ENCODE measurements at regions of chr9 and their contacts with region 1.

Region 1: DNA sequence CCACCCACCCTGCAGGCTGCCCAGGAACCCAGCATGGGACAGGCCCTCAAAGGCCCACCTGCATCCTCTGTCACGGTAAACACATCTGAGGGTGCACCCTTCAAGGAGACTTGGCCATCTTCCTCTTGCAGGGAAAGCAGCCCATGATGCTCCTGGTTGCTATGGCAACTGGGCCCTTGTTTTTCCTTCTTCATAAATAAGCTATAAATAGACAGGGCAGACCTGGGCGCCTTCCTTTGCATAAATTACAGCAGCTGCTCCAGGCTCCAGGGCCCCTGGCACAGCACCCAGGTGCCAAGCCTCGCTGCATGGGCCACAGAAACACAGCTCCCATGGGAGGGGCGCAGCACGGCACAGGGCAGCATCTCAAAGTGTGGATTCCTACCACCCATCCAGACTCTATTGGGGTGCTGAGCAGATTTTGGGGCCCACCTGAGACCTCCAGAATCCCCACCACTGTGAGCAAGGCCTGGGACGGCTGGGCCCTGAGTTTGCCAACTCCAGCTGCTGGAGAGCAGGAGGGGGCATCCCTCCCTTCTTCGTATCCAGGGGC is 5.8 kb upstream of the PSMB7 start:
- DNase-seq: no peak
- H3K4me3 ChIP-seq: no peak overlapping the region
- H3K27ac ChIP-seq: no peak overlapping the region
- H3K4me1 ChIP-seq: no peaks in the 10 kb centered on the region
- H3K27me3 ChIP-seq: no peaks in the 10 kb centered on the region
- CTCF ChIP-seq: no peak

Region 2: DNA sequence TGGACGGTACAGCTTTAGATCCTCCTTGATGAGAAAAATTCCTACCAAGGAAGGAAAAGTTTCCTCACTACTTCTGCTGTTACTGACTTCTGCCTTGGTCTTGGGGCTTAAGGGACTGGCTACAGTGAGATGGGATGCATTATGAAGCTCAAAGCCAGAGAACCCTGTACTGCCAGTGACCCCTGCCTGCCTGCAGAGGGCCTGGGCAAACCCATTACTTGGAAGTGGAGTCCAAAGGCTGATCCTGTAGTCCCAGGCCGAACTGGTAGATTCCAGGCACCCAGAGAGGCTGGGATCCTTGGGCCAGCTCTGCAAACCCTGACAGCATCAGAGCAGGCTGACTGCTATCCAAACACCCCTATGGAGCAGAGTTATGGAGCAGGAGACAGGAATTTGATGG is 111.8 kb after region 1 on chr9:
- CTCF ChIA-PET with region 1: interaction called, 22 read pairs
- POLR2A ChIA-PET with region 1: no interaction called
- intact Hi-C with region 1: loop called (anchors 1 kb)
- DNase-seq: no peak
- H3K4me3 ChIP-seq: no peak overlapping the region
- H3K27ac ChIP-seq: no peak overlapping the region
- H3K4me1 ChIP-seq: peaks cover 14% of the 10 kb centered on the region
- H3K27me3 ChIP-seq: no peaks in the 10 kb centered on the region
- CTCF ChIP-seq: no peak

Region 3: GRCh38 chr9:124617471-124618141 is 196.5 kb after region 1 on chr9:
- CTCF ChIA-PET with region 1: no interaction called
- POLR2A ChIA-PET with region 1: no interaction called
- intact Hi-C with region 1: loop called (anchors 1 kb)
- DNase-seq: peak; percentile 60 to 80
- H3K4me3 ChIP-seq: no peak overlapping the region
- H3K27ac ChIP-seq: peak overlapping the region; percentile 38
- H3K4me1 ChIP-seq: peaks cover 19% of the 10 kb centered on the region
- H3K27me3 ChIP-seq: no peaks in the 10 kb centered on the region
- CTCF ChIP-seq: peak; percentile 91

Region 4: GRCh38 chr9:124721109-124721906 is 300.2 kb after region 1 on chr9:
- CTCF ChIA-PET with region 1: interaction called, 11 read pairs
- POLR2A ChIA-PET with region 1: no interaction called
- intact Hi-C with region 1: no loop called
- DNase-seq: peak; percentile 18 to 54
- H3K4me3 ChIP-seq: no peak overlapping the region
- H3K27ac ChIP-seq: peak overlapping the region; percentile 16; the same call in 1 of the 2 replicates
- H3K4me1 ChIP-seq: peaks cover 6% of the 10 kb centered on the region; the same call in 1 of the 2 replicates
- H3K27me3 ChIP-seq: no peaks in the 10 kb centered on the region
- CTCF ChIP-seq: no peak

Region 5: DNA sequence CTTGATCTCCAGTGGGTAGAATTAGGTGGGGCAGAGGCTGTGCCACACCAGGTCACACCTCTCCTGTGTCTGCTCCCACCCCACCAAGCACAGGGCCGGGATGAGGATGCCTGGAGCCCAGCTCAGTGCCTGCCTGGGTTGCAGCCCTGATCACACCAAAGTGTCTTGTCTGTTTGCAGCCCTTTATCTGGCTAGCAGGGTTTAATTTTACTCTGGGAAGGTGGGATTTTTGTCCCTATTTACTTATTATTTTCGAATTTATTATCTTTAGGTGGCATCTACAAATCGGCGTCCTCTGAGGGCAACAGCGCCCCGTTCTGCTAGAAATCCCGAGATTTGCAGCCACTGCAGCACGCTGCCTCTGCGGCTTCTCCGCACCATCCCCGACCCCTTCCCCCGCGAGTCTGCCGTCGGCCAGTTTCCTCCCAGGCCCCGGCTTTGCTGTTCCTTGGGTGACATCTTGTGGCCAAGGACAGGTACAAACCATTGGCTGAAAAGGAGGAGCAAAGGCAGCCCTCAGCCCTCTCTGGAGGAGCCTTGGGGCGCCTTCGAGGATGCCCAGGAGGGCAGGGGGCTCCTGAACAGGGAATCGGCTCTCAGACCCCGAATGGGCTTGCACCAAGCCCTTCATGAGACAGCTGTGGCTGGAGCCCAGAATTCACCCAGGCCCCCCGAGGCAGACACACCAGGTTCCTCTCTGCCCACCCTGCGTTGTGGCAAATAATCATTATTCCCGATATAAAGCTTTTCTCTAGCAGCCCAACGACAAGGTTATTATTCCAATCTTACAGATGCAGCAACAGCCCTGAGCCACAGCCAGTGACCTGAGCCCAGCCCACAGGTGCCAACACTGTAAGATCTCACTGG is 953.6 kb after region 1 on chr9:
- CTCF ChIA-PET with region 1: no interaction called
- POLR2A ChIA-PET with region 1: no interaction called
- intact Hi-C with region 1: loop called (anchors 2 kb)
- DNase-seq: peak; percentile 57 to 70
- H3K4me3 ChIP-seq: peak overlapping the region; percentile 49; the same call in 1 of the 2 replicates
- H3K27ac ChIP-seq: no peak overlapping the region
- H3K4me1 ChIP-seq: no peaks in the 10 kb centered on the region
- H3K27me3 ChIP-seq: no peaks in the 10 kb centered on the region
- CTCF ChIP-seq: peak; percentile 91

Measured in PC-9 (cell line).